Activated T-helper 1 cell treated with anti-CD3 and anti-CD28 coated beads, Interleukin-12 subunit alpha, Interleukin-12 subunit beta, Interleukin-2, Interleukin-4 antibody, amounts not matched to agents 30 ng/mL and 10 ng/mL and 1 ng/mL, durations not matched to agents 14 hours and 24 hours and 36 hours (primary cell): ENCODE measurements at regions of chr4 and their contacts with region 1.

Region 1: GRCh38 chr4:55321707-55322264 is 24.3 kb upstream of the SRD5A3 start:
- DNase-seq: peak; percentile 11
- H3K4me3 Mint-ChIP-seq: no peak overlapping the region
- H3K27ac Mint-ChIP-seq: no peak overlapping the region
- H3K4me1 Mint-ChIP-seq: peaks cover 36% of the 10 kb centered on the region
- H3K27me3 Mint-ChIP-seq: peaks cover 3% of the 10 kb centered on the region

Region 2: DNA sequence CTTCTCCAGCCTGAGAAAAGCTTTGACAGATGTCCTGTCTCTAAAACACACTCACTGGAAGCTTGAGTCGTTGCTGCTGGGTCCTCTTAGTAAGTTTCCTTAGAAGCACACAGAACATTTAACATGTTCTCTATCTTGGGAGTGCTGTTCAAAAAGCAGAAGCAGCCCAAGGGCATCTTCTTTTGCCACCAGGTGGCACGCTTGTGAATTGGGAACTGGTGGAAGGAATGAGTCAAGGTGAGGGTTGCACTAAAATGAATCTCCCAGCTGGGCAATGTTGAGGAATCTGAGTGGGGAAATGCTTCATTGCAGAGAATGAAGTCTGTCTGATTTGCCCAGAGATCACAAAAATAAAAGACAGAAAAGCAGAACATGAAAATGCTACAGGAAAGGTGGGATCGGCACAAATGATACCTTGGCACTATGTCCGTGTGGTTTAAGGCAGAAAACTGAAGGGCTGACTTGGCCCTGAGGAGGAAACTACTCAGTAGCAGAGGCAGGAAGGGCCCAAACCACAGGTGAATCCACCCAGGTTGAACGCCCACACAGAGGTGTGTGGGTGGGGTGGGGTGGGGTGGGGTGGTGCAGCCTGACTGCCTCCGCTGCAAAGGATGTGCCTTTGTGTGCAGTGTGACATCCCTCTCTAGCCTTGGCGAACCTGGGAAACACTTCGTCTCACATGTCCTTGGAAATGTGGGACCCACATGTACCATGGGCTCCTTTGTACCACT is 638.0 kb before region 1 on chr4:
- intact Hi-C with region 1: loop called (anchors 1 kb)
- DNase-seq: peak; percentile 15
- H3K4me3 Mint-ChIP-seq: no peak overlapping the region
- H3K27ac Mint-ChIP-seq: no peak overlapping the region
- H3K4me1 Mint-ChIP-seq: peaks cover 6% of the 10 kb centered on the region
- H3K27me3 Mint-ChIP-seq: no peaks in the 10 kb centered on the region

Region 3: DNA sequence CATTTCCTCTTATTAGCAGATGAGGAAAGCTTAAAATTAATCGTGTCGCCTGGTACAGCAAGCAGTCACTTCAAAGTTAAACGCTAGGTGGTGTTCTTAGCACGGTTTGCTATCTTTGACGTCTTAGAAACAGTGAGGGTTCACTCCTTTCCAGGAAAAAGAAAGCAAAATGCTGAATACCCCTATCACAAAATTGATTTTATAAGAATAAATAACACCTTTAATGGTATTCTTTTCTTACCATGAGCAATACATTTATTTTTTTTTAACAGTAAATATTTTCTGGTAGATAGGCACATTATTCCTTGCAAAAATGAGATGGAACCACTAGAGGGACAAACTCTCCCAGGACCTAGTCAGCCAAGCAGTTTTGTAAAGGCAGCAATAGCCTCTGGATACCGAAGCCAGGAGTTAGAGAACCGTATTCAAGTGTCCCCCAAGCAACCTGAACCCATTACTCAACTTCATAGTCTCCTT is 350.3 kb before region 1 on chr4:
- intact Hi-C with region 1: loop called (anchors 1 kb)
- DNase-seq: no peak
- H3K4me3 Mint-ChIP-seq: no peak overlapping the region
- H3K27ac Mint-ChIP-seq: no peak overlapping the region
- H3K4me1 Mint-ChIP-seq: no peaks in the 10 kb centered on the region
- H3K27me3 Mint-ChIP-seq: no peaks in the 10 kb centered on the region

Region 4: GRCh38 chr4:55184600-55185523 is 136.9 kb before region 1 on chr4:
- intact Hi-C with region 1: loop called (anchors 1 kb)
- DNase-seq: no peak
- H3K4me3 Mint-ChIP-seq: no peak overlapping the region
- H3K27ac Mint-ChIP-seq: no peak overlapping the region
- H3K4me1 Mint-ChIP-seq: no peaks in the 10 kb centered on the region
- H3K27me3 Mint-ChIP-seq: peaks cover 3% of the 10 kb centered on the region

Region 5: DNA sequence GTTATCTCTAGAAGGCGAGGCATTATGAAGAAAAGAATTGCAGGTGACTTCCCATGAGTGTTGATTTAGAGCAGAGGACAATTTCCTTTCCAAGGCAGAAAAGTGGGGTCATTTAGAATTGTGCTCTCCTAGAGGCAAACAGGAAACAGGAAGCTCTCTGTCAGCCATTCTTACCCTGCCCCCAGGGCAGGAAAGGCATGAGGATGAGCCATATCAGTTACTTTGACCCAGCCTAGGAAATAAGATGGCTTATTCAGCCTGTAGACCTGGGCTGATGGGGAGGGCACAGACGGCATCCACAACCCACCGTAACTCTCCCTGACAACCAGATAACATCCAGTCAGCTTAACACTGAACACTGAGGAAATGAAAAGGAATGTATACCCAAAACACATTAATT is 107.6 kb before region 1 on chr4:
- intact Hi-C with region 1: no loop called
- DNase-seq: no peak
- H3K4me3 Mint-ChIP-seq: no peak overlapping the region
- H3K27ac Mint-ChIP-seq: no peak overlapping the region
- H3K4me1 Mint-ChIP-seq: no peaks in the 10 kb centered on the region
- H3K27me3 Mint-ChIP-seq: no peaks in the 10 kb centered on the region

Region 6: GRCh38 chr4:55336136-55337034 is 14.6 kb after region 1 on chr4:
- intact Hi-C with region 1: loop called (anchors 2 kb)
- DNase-seq: no peak
- H3K4me3 Mint-ChIP-seq: no peak overlapping the region
- H3K27ac Mint-ChIP-seq: peak overlapping the region; percentile 47
- H3K4me1 Mint-ChIP-seq: peaks cover 24% of the 10 kb centered on the region
- H3K27me3 Mint-ChIP-seq: no peaks in the 10 kb centered on the region